ENCODE measurements at regions of chr5 and their contacts with region 1.

Region 1: DNA sequence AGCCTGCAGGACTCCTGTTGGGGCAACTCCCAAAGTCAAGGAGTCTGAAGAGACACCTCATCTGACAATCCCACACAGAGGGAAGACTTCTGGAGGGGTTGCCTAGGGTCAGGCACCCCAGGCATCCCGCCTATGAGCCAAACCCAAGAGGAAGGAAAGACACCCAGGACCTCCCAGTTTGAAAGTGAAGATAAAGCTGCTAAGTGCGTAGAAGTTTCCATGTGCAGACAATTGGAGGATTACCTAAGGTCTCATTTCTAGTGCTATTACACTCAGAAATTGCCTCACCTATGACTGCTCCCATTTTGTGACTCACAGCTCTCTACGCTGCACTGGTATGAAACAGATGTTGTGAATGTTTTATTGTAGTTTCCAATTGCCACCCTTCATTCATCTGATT is 322.9 kb downstream of the SLIT3 start:
- DNase-seq: peak; percentile 89
- H3K4me3 Mint-ChIP-seq: no peak overlapping the region
- H3K27ac Mint-ChIP-seq: no peak overlapping the region
- H3K4me1 Mint-ChIP-seq: peaks cover 10% of the 10 kb centered on the region
- H3K27me3 Mint-ChIP-seq: no peaks in the 10 kb centered on the region
- CTCF ChIP-seq: no peak

Region 2: GRCh38 chr5:168390491-168390890 is 587.5 kb before region 1 on chr5:
- CTCF ChIA-PET with region 1: no interaction called
- POLR2A ChIA-PET with region 1: no interaction called
- intact Hi-C with region 1: no loop called
- DNase-seq: peak; percentile 28
- H3K4me3 Mint-ChIP-seq: no peak overlapping the region
- H3K27ac Mint-ChIP-seq: peak overlapping the region; percentile 66
- H3K4me1 Mint-ChIP-seq: peaks cover 7% of the 10 kb centered on the region
- H3K27me3 Mint-ChIP-seq: no peaks in the 10 kb centered on the region
- CTCF ChIP-seq: no peak

Region 3: DNA sequence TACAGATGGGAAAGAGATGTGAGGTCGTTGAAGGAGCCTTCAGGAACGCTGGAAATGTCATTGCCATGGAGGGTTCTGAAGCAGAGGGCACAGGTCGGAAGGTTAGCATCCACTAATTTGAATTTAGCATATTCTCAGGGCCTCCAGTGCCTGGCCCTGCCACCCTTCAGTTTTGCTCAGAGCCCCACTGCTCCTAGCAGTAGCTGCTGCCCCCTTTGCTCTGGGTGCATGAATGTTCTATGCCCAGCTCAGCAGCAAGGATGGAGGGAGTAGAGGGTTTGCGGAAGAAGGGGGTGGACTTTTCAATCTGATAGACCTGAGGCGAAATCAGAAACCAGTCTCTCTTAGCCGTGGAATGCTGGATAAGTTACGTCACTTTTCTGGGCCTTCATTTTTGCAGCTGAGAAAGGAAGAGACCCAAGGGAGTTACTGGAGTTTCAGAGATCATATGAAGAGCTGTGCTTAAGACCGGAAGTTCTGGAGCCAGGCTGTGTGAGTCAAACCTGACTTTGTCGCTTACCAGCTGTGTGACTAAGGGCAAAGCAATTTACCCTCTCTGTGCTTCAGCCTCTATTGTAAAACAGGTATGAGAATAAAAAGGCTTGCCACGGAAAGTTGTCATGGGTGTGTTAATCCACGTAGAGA is 265.6 kb before region 1 on chr5:
- CTCF ChIA-PET with region 1: interaction called, 3 read pairs
- POLR2A ChIA-PET with region 1: no interaction called
- intact Hi-C with region 1: loop called (anchors 2 kb)
- DNase-seq: peak; percentile 87
- H3K4me3 Mint-ChIP-seq: no peak overlapping the region
- H3K27ac Mint-ChIP-seq: peak overlapping the region; percentile 70
- H3K4me1 Mint-ChIP-seq: peaks cover 17% of the 10 kb centered on the region
- H3K27me3 Mint-ChIP-seq: no peaks in the 10 kb centered on the region
- CTCF ChIP-seq: no peak

Measured in MCF 10A (cell line).